Activated CD4-positive, alpha-beta T cell treated with anti-CD3 and anti-CD28 coated beads, Interleukin-2, amount 10 ng/mL, durations not matched to agents 7 days and 5 days (primary cell): ENCODE measurements at regions of chr1 and their contacts with region 1.

Region 1: DNA sequence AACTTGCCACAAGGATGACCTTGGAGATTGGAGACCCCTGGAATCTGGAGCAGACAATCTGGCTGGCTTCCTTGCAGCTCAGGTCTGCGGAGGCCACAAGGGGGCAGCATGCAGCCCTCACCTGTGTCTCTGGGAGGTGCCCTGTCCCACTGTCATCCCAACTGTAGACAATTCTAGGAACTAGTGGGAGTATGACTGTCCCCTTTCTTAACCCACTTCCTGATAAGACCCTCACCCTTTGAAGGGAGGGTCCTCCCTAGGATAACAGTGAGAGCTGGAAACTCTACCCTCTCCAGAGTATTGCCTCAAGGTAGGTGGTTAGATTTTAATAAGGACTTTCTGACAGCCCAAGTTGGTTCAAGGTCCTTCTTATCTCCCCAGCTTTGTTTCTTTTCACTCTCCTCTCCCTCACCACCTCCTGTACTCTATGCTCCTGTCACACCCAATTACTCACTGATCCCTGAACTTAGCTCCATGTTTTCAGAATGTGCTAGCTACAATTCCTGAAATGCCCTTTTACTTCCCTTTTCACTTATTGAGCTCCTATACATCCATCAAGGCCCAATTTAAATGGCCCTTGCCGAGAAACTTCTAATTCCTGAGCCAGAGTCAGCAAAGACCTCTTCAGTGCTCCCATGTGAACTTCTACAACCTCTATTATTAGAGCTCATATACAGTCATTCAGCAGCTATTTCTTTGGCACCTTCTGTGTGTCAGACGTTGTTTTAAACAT is 9.2 kb upstream of the KCNQ4 start:
- DNase-seq: peak; percentile 60
- H3K4me3 Mint-ChIP-seq: no peak overlapping the region
- H3K27ac Mint-ChIP-seq: no peak overlapping the region
- H3K4me1 Mint-ChIP-seq: peaks cover 26% of the 10 kb centered on the region
- H3K27me3 Mint-ChIP-seq: no peaks in the 10 kb centered on the region

Region 2: GRCh38 chr1:40305457-40305856 is 469.0 kb before region 1 on chr1:
- CTCF ChIA-PET with region 1: no interaction called
- POLR2A ChIA-PET with region 1: no interaction called
- DNase-seq: peak; percentile 19
- H3K4me3 Mint-ChIP-seq: no peak overlapping the region
- H3K27ac Mint-ChIP-seq: no peak overlapping the region
- H3K4me1 Mint-ChIP-seq: no peaks in the 10 kb centered on the region
- H3K27me3 Mint-ChIP-seq: no peaks in the 10 kb centered on the region

Region 3: DNA sequence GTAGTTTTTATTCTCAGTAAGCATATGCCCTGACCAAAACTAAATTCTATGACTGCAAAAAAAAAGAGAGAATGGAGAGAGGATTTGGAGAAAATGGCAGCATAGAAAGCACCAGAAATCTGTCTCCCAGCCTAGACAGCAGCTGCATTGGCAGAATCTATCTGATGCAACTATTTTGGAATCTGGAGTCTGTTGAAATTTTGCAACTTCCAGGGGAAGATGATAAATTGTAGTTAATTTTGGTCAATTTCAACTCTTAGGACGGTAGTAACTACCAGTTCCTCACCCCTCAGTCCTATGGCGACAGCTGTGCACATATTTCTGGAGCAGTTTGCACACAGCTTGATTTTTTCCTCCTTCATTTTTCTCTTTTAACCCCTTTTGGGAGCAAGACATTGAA is 254.9 kb before region 1 on chr1:
- CTCF ChIA-PET with region 1: no interaction called
- POLR2A ChIA-PET with region 1: interaction called, 11 read pairs
- DNase-seq: no peak
- H3K4me3 Mint-ChIP-seq: no peak overlapping the region
- H3K27ac Mint-ChIP-seq: no peak overlapping the region
- H3K4me1 Mint-ChIP-seq: no peaks in the 10 kb centered on the region
- H3K27me3 Mint-ChIP-seq: no peaks in the 10 kb centered on the region

Region 4: DNA sequence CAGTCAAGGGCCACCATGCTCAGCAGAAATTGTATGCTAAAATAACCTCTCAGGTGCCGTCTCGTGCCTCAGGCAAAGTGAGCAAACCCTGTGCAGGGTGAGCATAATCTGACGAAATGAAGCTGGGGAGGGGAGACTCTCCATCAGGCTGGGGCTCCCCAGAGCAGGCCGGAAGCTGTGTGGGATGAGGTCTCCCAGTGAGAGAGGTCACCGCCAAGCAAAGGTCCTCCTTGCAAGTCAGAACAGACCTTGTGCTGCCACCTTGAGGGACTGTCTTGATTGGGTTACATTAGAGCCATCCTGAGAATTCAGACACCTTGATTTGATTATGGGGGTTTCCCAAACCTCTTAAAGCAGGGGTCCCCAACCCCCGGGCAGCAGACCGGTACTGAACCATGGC is 178.8 kb before region 1 on chr1:
- CTCF ChIA-PET with region 1: no interaction called
- POLR2A ChIA-PET with region 1: no interaction called
- DNase-seq: no peak
- H3K4me3 Mint-ChIP-seq: no peak overlapping the region
- H3K27ac Mint-ChIP-seq: no peak overlapping the region
- H3K4me1 Mint-ChIP-seq: peaks cover 16% of the 10 kb centered on the region
- H3K27me3 Mint-ChIP-seq: peaks cover 19% of the 10 kb centered on the region

Region 5: DNA sequence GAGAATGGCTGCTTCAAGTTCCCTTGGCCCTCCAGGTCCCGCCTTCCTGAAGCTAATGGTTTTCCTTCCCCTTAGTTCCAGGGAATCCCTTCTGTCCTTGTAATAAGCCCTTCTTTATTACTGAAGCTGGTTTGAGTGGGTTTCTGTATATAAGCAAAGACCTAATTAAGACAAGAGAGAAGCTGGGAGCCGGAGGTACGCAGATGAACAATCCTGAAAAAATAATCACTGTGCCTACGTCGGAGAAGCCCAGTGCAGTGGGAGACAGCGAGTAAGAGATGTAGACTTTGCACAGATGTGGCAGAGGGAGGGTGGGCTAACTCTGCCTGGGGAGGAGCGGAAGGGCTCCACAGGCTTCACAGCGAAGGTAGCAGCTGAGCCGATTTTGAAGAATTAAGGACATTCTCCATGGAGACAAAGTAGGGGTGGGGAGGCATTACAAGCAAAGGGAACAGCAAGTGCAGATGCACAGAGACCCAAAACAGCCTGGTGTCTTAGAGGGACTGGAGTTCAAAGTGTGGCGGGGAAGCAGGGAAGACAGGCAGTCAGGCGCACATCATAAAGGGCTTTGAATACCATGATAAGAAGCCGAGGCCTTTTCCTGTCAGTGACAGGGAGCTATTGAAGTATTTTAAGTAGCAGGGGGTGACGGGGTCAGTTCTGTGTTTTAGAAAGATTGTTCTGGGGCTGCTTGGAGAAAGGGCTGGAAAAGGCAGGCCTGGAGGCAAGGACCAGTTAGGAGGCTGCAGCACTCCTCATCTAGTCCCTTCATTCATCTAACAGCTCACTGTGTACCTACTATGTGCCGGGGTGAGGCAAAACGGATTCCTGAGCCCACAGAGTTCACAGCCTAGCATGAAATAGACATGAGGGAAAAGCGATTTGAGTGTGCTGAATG is 115.4 kb before region 1 on chr1:
- CTCF ChIA-PET with region 1: no interaction called
- POLR2A ChIA-PET with region 1: no interaction called
- DNase-seq: no peak
- H3K4me3 Mint-ChIP-seq: no peak overlapping the region
- H3K27ac Mint-ChIP-seq: no peak overlapping the region
- H3K4me1 Mint-ChIP-seq: peaks cover 12% of the 10 kb centered on the region
- H3K27me3 Mint-ChIP-seq: peaks cover 2% of the 10 kb centered on the region

Region 6: DNA sequence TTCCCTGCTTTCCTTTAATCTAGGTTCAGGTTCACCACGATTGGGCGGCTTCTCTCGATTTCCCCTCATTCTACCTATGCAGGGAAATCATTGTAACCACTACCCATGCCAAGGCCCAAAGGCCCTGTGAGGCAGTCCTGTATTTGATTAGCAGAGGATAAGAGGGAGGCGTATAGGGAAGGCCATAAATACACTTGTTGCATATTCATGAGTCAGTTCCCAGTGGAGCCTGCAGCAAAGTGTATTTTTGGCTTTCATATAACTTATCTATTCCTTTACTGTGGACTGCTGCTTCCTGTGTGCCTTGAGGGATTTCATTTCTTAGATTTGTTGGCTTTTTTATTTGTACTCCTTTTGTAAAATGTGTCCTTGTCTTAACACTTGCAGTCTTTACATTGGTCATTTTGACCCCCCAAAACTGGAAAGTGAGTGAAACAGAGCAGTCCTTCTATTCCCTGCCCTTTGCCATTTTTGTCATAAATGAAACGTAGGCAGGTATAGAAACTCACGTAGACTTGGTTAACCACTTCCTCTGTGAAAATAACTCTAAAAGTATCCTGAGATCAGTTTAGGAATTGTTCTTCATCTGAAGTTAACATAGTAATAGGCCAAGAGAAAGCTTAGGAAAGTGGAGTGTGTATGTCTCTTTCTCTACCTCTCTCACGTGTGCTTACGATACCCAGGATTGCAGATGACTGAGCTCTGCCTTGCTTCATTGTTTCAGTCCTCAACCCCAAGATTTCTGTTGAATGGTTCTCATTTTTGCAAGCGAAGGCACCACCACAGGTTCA is 10.5 kb before region 1 on chr1:
- CTCF ChIA-PET with region 1: interaction called, 33 read pairs
- POLR2A ChIA-PET with region 1: no interaction called
- DNase-seq: no peak
- H3K4me3 Mint-ChIP-seq: peak overlapping the region; percentile 35
- H3K27ac Mint-ChIP-seq: peak overlapping the region; percentile 87
- H3K4me1 Mint-ChIP-seq: peaks cover 52% of the 10 kb centered on the region
- H3K27me3 Mint-ChIP-seq: no peaks in the 10 kb centered on the region

Region 7: GRCh38 chr1:40796939-40797667 is 22.7 kb after region 1 on chr1:
- CTCF ChIA-PET with region 1: interaction called, 13 read pairs
- POLR2A ChIA-PET with region 1: no interaction called
- DNase-seq: no peak
- H3K4me3 Mint-ChIP-seq: no peak overlapping the region
- H3K27ac Mint-ChIP-seq: peak overlapping the region; percentile 82
- H3K4me1 Mint-ChIP-seq: peaks cover 48% of the 10 kb centered on the region
- H3K27me3 Mint-ChIP-seq: no peaks in the 10 kb centered on the region

Region 8: GRCh38 chr1:40932018-40932417 is 157.6 kb after region 1 on chr1:
- CTCF ChIA-PET with region 1: no interaction called
- POLR2A ChIA-PET with region 1: no interaction called
- DNase-seq: no peak
- H3K4me3 Mint-ChIP-seq: no peak overlapping the region
- H3K27ac Mint-ChIP-seq: no peak overlapping the region
- H3K4me1 Mint-ChIP-seq: no peaks in the 10 kb centered on the region
- H3K27me3 Mint-ChIP-seq: no peaks in the 10 kb centered on the region

Region 9: DNA sequence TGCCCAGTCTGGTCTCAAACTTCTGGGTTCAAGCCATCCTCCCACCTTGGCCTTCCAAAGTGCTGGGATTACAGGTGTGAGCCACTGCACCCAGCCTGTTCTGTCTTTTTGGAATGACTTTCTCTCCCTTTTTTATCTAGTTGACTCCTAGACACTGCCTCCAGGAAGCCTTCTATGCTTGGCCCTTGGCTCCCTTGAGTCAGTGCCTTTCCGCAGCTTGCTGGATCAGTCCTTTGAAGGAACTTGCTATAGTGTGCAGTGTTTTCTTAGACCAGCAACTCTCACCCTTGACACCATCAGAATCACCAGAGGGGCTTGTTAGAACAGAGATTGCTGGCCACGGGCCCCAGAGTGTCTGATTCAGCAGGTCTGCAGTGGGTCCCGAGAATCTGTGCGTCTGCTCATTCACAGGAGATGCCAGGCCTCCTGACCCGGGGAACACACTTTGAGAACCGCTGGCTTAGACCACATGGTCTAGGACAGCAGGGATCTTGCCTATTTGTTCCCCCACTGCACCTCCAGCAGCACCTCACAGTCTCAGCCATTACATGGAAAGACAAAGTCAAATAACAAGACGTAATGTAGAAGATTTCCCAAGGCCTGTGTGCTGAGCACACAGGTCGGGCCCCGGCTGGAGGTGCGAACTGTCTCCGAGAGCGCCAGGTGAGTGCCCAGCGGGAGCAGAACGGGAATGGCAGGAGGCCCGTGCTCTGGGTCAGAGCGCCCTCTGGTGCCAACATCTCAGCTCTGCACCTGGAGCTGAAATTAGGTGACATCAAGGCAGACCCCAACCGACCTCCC is 177.7 kb after region 1 on chr1:
- CTCF ChIA-PET with region 1: interaction called, 14 read pairs
- POLR2A ChIA-PET with region 1: no interaction called
- DNase-seq: peak; percentile 54
- H3K4me3 Mint-ChIP-seq: no peak overlapping the region
- H3K27ac Mint-ChIP-seq: no peak overlapping the region
- H3K4me1 Mint-ChIP-seq: peaks cover 14% of the 10 kb centered on the region
- H3K27me3 Mint-ChIP-seq: peaks cover 26% of the 10 kb centered on the region